Calu3 (cell line): ENCODE measurements at regions of chr15 and their contacts with region 1.

Region 1: GRCh38 chr15:70812827-70813364 is 41.1 kb downstream of the LARP6 start:
- DNase-seq: no peak
- H3K4me3 Mint-ChIP-seq: peak overlapping the region; percentile 38
- H3K27ac Mint-ChIP-seq: no peak overlapping the region
- H3K4me1 Mint-ChIP-seq: no peaks in the 10 kb centered on the region
- H3K27me3 Mint-ChIP-seq: peaks cover 14% of the 10 kb centered on the region
- CTCF ChIP-seq: no peak

Region 2: GRCh38 chr15:70679919-70680231 is 133.0 kb before region 1 on chr15:
- CTCF ChIA-PET with region 1: interaction called, 6 read pairs
- intact Hi-C with region 1: loop called (anchors 1 kb)
- DNase-seq: no peak
- H3K4me3 Mint-ChIP-seq: no peak overlapping the region
- H3K27ac Mint-ChIP-seq: no peak overlapping the region
- H3K4me1 Mint-ChIP-seq: peaks cover 8% of the 10 kb centered on the region
- H3K27me3 Mint-ChIP-seq: no peaks in the 10 kb centered on the region
- CTCF ChIP-seq: no peak

Region 3: GRCh38 chr15:71093121-71094024 is 280.5 kb after region 1 on chr15:
- CTCF ChIA-PET with region 1: no interaction called
- intact Hi-C with region 1: no loop called
- DNase-seq: peak; percentile 76
- H3K4me3 Mint-ChIP-seq: no peak overlapping the region
- H3K27ac Mint-ChIP-seq: peak overlapping the region; percentile 57
- H3K4me1 Mint-ChIP-seq: peaks cover 23% of the 10 kb centered on the region
- H3K27me3 Mint-ChIP-seq: no peaks in the 10 kb centered on the region
- CTCF ChIP-seq: no peak